Vagina (tissue), 2 donors: ENCODE measurements at regions of chr14 and their contacts with region 1.

Region 1: GRCh38 chr14:40436551-40436950 is 1004.3 kb upstream of the FBXO33 start:
- DNase-seq: no peak
- H3K4me3 ChIP-seq: no peak overlapping the region
- H3K27ac ChIP-seq: no peak overlapping the region
- H3K4me1 ChIP-seq: no peaks in the 10 kb centered on the region
- H3K27me3 ChIP-seq: no peaks in the 10 kb centered on the region
- CTCF ChIP-seq: no peak
- POLR2A ChIP-seq: no peak

Region 2: DNA sequence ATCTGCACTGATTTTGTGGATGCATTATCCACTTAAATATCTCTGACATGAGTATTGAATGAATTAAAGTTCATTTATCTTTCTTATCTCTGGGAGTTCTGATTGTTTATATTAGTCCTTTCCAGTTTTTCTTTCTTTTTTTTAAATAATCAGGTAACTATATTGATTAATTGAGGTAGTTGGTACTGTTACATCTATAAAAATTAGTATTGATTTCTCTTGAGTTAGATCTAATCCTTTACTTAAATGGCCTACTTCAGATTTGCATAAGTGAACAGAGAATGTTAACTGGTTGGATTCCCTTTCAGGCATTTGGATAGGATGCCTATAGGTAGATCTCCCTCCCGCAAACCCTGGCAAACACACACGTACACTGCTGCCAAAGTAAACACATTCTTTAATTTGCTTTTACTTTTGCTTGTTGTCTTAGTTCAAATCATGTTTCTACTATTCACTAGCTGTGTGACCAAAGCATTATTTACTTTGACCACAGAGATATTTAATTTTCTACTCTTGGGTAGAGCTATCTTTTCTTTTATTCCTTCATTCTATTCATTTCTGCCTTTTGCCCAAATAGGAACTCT is 68.3 kb before region 1 on chr14:
- intact Hi-C with region 1: no loop called
- DNase-seq: no peak
- H3K4me3 ChIP-seq: no peak overlapping the region
- H3K27ac ChIP-seq: no peak overlapping the region
- H3K4me1 ChIP-seq: no peaks in the 10 kb centered on the region
- H3K27me3 ChIP-seq: no peaks in the 10 kb centered on the region
- CTCF ChIP-seq: no peak
- POLR2A ChIP-seq: no peak

Region 3: DNA sequence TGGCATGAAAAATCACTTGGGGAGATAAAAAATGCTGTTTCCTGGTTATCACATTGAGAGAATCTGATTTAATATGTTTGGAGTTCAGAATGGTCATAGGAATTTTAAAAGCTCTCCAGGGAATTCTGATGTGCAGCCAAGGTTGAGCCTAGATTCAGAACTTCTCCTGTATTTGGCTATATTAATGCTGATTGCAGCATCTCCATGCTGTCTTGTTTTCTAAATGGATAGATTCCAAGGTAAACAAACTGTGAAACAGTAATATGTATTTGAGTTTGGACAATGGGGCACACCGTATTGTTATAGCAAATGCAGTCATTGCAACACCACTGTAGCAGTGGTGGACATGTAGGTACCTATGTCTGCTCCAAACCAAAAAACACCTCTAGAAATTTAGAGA is 22.1 kb before region 1 on chr14:
- intact Hi-C with region 1: loop called (anchors 1 kb)
- DNase-seq: no peak
- H3K4me3 ChIP-seq: no peak overlapping the region
- H3K27ac ChIP-seq: no peak overlapping the region
- H3K4me1 ChIP-seq: no peaks in the 10 kb centered on the region
- H3K27me3 ChIP-seq: no peaks in the 10 kb centered on the region
- CTCF ChIP-seq: no peak
- POLR2A ChIP-seq: no peak